ENCODE measurements at regions of chr16 and their contacts with region 1.

Region 1: GRCh38 chr16:25224731-25225319 is 8.1 kb downstream of the AQP8 start:
- DNase-seq: no peak
- H3K4me3 ChIP-seq: no peak overlapping the region
- H3K27ac ChIP-seq: no peak overlapping the region
- H3K4me1 ChIP-seq: no peaks in the 10 kb centered on the region
- H3K27me3 ChIP-seq: no peaks in the 10 kb centered on the region
- CTCF ChIP-seq: no peak
- POLR2A ChIP-seq: no peak

Region 2: GRCh38 chr16:24776501-24777220 is 448.2 kb before region 1 on chr16:
- CTCF ChIA-PET with region 1: no interaction called
- POLR2A ChIA-PET with region 1: no interaction called
- dilution Hi-C with region 1: no loop called
- intact Hi-C with region 1: no loop called
- DNase-seq: peak; percentile 63
- H3K4me3 ChIP-seq: no peak overlapping the region
- H3K27ac ChIP-seq: no peak overlapping the region
- H3K4me1 ChIP-seq: no peaks in the 10 kb centered on the region
- H3K27me3 ChIP-seq: no peaks in the 10 kb centered on the region
- CTCF ChIP-seq: no peak
- POLR2A ChIP-seq: no peak

Region 3: DNA sequence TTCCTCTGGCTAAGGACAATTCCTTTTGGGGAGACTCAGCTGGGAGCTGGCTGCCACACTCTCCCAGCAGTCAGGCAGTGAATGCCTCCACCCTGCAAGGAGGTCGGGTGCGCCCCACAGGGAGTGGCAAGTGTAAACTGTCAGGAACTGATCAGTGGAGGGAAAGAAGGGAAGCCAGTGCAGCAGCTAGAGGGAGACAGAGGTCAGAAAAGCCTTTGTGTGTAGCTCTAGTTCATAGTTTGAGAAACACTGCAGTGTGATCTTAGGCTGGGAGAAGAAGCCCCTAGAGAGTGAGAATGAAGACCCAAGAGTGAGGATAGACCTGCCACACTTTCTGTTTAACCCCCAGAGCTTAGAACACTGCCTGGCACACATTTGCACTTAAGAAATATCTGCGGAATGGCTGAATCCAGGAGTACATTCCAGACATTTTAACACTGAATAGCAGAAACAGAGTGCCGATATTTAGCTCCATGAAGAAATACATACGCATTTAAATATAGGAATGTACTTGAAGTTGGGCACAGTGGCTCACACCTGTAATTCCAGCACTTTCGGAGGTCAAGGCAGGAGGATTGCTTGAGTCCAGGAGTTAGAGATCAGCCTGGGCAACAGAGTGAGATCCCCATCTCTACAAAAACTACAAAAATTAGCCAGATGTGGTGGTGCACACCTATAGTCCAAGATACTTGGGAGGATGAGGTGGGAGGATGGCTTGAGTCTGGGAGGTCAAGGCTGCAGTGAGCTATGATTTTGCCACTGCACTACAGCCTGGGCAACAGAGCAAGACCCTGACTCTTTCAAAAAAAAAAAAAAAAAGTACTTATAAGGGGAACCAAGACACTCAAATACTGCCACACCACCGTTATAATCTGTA is 390.1 kb before region 1 on chr16:
- CTCF ChIA-PET with region 1: interaction called, 27 read pairs
- POLR2A ChIA-PET with region 1: no interaction called
- dilution Hi-C with region 1: no loop called
- intact Hi-C with region 1: loop called (anchors 2 kb)
- DNase-seq: peak; percentile 52
- H3K4me3 ChIP-seq: no peak overlapping the region
- H3K27ac ChIP-seq: no peak overlapping the region
- H3K4me1 ChIP-seq: peaks cover 12% of the 10 kb centered on the region
- H3K27me3 ChIP-seq: no peaks in the 10 kb centered on the region
- CTCF ChIP-seq: peak; percentile 44 to 64
- POLR2A ChIP-seq: no peak

Region 4: DNA sequence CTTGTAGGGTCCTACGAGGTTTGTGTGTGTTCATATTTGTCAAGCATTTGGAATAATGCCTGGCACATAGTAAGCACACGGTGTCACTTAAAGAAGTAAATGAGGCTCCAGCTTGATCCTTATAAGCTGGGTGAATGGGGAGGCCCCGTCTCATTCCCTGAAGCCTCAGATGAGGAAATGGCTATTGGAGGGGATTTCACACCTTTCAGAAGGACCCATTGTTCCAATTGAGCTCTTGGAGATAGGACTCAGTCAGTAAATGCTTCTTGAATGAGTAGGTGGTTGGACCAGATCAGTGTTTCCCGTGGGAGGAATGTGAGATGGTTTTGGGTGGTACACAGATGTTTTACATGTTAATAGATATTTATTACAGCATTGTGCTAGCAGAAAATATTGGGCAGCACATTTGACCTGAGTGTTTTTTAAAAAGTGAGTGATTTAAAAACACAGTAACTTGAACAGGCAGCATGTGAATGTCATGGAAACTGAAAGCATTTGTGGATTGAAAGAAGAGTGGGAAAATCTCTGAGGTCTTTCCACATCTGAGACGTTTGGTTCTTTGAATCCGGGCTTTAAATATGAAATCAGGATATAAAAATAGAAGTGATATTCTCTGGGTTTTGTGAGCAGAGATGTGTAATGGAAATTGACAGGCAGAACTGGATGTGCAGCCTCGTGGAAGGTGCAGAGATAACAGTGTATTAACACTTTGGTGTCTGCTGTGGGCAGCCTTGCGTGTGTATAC is 173.2 kb before region 1 on chr16:
- CTCF ChIA-PET with region 1: interaction called, 22 read pairs
- POLR2A ChIA-PET with region 1: no interaction called
- dilution Hi-C with region 1: no loop called
- intact Hi-C with region 1: loop called (anchors 1 kb)
- DNase-seq: peak; percentile 31
- H3K4me3 ChIP-seq: no peak overlapping the region
- H3K27ac ChIP-seq: no peak overlapping the region
- H3K4me1 ChIP-seq: peaks cover 20% of the 10 kb centered on the region
- H3K27me3 ChIP-seq: no peaks in the 10 kb centered on the region
- CTCF ChIP-seq: no peak
- POLR2A ChIP-seq: no peak

Region 5: GRCh38 chr16:25210758-25211157 is 14.1 kb before region 1 on chr16:
- CTCF ChIA-PET with region 1: interaction called, 11 read pairs
- POLR2A ChIA-PET with region 1: no interaction called
- dilution Hi-C with region 1: no loop called
- intact Hi-C with region 1: no loop called
- DNase-seq: no peak
- H3K4me3 ChIP-seq: no peak overlapping the region
- H3K27ac ChIP-seq: no peak overlapping the region
- H3K4me1 ChIP-seq: no peaks in the 10 kb centered on the region
- H3K27me3 ChIP-seq: peaks cover 0 to 1% of the 10 kb centered on the region in 2 experiments
- CTCF ChIP-seq: no peak
- POLR2A ChIP-seq: no peak

Region 6: GRCh38 chr16:25270577-25270976 is 45.8 kb after region 1 on chr16:
- CTCF ChIA-PET with region 1: no interaction called
- POLR2A ChIA-PET with region 1: no interaction called
- dilution Hi-C with region 1: no loop called
- intact Hi-C with region 1: no loop called
- DNase-seq: no peak
- H3K4me3 ChIP-seq: no peak overlapping the region
- H3K27ac ChIP-seq: no peak overlapping the region
- H3K4me1 ChIP-seq: no peaks in the 10 kb centered on the region
- H3K27me3 ChIP-seq: no peaks in the 10 kb centered on the region
- CTCF ChIP-seq: no peak
- POLR2A ChIP-seq: no peak

Region 7: GRCh38 chr16:25523183-25523582 is 298.4 kb after region 1 on chr16:
- CTCF ChIA-PET with region 1: no interaction called
- POLR2A ChIA-PET with region 1: no interaction called
- dilution Hi-C with region 1: no loop called
- intact Hi-C with region 1: no loop called
- DNase-seq: no peak
- H3K4me3 ChIP-seq: no peak overlapping the region
- H3K27ac ChIP-seq: no peak overlapping the region
- H3K4me1 ChIP-seq: no peaks in the 10 kb centered on the region
- H3K27me3 ChIP-seq: no peaks in the 10 kb centered on the region
- CTCF ChIP-seq: no peak
- POLR2A ChIP-seq: no peak